GM18951 (cell line): ENCODE measurements at regions of chr2 and their contacts with region 1.

Region 1: DNA sequence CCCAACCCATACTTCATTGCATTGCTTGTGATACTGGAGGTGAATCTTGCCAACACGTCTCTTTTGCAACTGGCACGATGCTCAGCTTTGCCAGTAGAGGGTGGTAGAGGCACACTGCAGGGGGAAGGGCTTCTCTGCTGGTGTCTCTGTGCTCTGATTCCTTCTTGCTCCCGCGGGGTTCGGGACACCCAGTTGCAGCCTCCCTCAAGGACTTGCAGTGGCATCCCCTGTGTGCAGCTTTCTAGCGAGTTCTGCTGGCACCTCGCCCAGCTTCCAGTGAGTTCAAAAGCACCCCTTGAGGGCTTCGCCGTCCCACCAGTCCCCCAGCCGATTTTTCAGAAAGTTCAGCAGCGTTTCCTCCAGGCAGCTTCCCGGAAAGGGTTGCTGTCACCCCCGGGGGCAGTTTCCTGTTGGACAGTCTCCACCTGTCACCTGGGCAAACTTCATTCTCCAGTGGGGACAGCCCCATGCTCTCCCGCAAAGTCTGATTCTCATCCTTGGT is 35.3 kb upstream of the EN1 start:
- POLR2A ChIP-seq: no peak

Region 2: GRCh38 chr2:119290859-119291587 is 408.3 kb after region 1 on chr2:
- in situ Hi-C with region 1: loop called (anchors 25 kb)
- POLR2A ChIP-seq: no peak

Region 3: GRCh38 chr2:119315241-119315927 is 432.6 kb after region 1 on chr2:
- in situ Hi-C with region 1: no loop called
- POLR2A ChIP-seq: no peak